Dorsolateral prefrontal cortex (tissue), 120 donors: ENCODE measurements at regions of chr16 and their contacts with region 1.

Region 1: GRCh38 chr16:2867987-2868789 is 10.2 kb upstream of the PRSS22 start:
- DNase-seq: peak; percentile 92 to 97 (median 95)
- H3K4me3 ChIP-seq: peak overlapping the region; percentile 60 to 99 (median 80)
- H3K27ac ChIP-seq: peak overlapping the region; percentile 77 to 99 (median 96)
- H3K27me3 ChIP-seq: no peaks in the 10 kb centered on the region
- CTCF ChIP-seq: peak in 55 of 56 donors; percentile 87 to 99 (median 98)

Region 2: DNA sequence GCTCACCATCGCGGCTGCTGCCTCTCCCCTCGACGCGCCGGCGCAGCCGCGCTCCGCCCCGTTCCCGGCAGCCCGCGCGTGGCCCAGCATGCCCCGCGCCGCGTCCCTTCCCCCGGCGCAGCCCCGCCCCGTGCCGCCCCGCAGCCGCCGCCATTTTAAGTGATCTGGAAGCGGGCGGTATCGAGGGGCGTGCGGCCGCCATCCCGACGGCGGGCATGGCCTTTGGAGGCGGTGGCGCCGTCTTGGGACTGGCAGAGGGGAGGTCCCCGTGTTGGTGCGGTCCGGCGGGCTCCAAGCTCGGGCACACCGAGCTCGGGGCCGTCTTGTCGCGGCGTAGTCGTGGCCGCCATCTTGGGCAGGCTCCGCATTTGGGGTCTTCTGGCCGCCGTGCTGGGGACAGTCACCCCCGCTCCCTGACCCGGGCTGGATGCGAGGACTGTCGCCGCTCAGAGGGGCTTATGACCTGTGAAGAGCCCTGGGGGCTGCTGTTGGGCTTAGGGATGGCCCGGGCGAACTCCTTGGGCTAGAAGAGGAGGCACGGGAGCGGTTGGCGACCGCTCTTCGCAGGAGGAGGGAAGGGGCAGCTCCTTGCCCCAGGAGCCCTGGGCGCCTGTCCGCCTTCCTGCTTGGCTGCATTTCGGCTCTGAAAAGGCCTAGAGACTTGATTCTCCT is 90.8 kb before region 1 on chr16 and contains the start of gene ELOB:
- intact Hi-C with region 1: loop called (anchors 5 kb)
- DNase-seq: peak; percentile 64 to 89 (median 78)
- H3K4me3 ChIP-seq: peak within 1 kb of the TSS; percentile 76 to 100 (median 96)
- H3K27ac ChIP-seq: peak within 1 kb of the TSS; percentile 93 to 100 (median 100)
- H3K27me3 ChIP-seq: no peaks in the 10 kb centered on the region
- CTCF ChIP-seq: peak in 8 of 56 donors; percentile 12 to 33 (median 20)
- total RNA-seq, gene ELOB: 150 to 306 (median 223) TPM

Region 3: GRCh38 chr16:2838928-2839327 is 29.3 kb before region 1 on chr16:
- intact Hi-C with region 1: loop called in 1 of 2 experiments (anchors 1 kb)
- DNase-seq: peak; percentile 59 to 83 (median 74)
- H3K4me3 ChIP-seq: peak overlapping the region in 1 of 59 donors; percentile 5
- H3K27ac ChIP-seq: peak overlapping the region in 8 of 59 donors; percentile 0 to 71 (median 38)
- H3K27me3 ChIP-seq: peaks cover 0 to 2% (median 0%) of the 10 kb centered on the region in 45 donors
- CTCF ChIP-seq: peak in 55 of 56 donors; percentile 52 to 88 (median 75)

Region 4: GRCh38 chr16:2905431-2906387 is 37.5 kb after region 1 on chr16:
- intact Hi-C with region 1: loop called in 1 of 2 experiments (anchors 5 kb)
- DNase-seq: peak; percentile 98 to 100 (median 100)
- H3K4me3 ChIP-seq: peak overlapping the region; percentile 53 to 95 (median 83)
- H3K27ac ChIP-seq: peak overlapping the region in 47 of 59 donors; percentile 17 to 99 (median 95)
- H3K27me3 ChIP-seq: no peaks in the 10 kb centered on the region
- CTCF ChIP-seq: peak in 9 of 56 donors; percentile 7 to 36 (median 32)

Region 5: GRCh38 chr16:3065069-3065741 is 197.0 kb after region 1 on chr16 and contains the start of gene IL32:
- intact Hi-C with region 1: no loop called
- DNase-seq: no peak
- H3K4me3 ChIP-seq: peak within 1 kb of the TSS in 32 of 59 donors; percentile 2 to 53 (median 22)
- H3K27ac ChIP-seq: peak within 1 kb of the TSS in 15 of 59 donors; percentile 11 to 70 (median 44)
- H3K27me3 ChIP-seq: peaks cover 0 to 6% (median 0%) of the 10 kb centered on the region in 45 donors
- CTCF ChIP-seq: no peak
- total RNA-seq, gene IL32: 1.7 to 41.8 (median 8.0) TPM